Activated CD4-positive, alpha-beta memory T cell treated with anti-CD3 and anti-CD28 coated beads for 36 hours (primary cell): ENCODE measurements at regions of chr13 and their contacts with region 1.

Region 1: GRCh38 chr13:98528663-98529570 is 48.0 kb downstream of the STK24 start:
- DNase-seq: peak; percentile 56
- H3K4me3 Mint-ChIP-seq: peak overlapping the region; percentile 62
- H3K27ac Mint-ChIP-seq: peak overlapping the region; percentile 89
- H3K4me1 Mint-ChIP-seq: peaks cover 95% of the 10 kb centered on the region
- H3K27me3 Mint-ChIP-seq: no peaks in the 10 kb centered on the region

Region 2: DNA sequence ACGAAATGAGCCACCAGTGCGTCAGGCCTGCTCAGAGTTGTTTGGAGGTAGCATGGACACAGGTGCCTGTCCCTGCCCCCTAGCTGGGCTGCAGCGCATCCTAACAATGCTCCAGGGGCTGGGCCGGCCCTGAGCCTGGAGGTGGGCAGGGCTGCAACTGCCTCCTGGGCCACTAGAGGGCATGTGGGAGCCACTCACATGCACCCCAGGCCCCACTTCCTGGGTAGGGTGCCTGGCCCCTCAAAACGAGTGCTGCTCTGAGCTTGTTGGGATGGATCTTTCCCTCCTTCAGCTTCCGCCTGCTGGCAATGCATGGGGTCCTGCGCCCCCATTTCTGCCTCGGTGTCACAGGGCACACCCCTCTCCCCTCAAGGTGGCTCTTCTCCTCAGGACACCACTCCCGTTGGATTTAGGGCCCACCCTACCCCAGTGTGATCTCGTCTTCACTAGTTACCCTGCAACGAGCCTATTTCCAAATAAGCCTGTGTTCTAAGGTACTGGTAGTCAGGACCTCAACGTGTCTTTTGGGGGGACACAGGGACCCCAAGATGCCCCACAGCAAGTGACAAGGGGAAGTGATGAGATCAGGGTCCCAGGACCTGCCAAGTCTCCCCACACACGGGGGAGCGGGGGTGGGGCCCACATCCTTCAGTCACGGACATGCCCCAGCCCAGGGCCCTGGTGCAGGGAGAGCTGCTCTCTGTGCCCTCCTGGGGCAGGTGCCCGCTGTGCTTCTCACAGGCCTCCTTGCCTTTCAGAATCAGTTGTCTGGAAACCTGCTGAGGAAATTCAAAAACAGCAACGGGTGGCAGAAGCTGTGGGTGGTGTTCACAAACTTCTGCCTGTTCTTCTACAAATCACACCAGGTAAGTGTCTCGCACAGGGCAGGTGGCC is 83.3 kb before region 1 on chr13:
- CTCF ChIA-PET with region 1: interaction called, 11 read pairs
- POLR2A ChIA-PET with region 1: no interaction called
- intact Hi-C with region 1: no loop called
- DNase-seq: peak; percentile 88
- H3K4me3 Mint-ChIP-seq: no peak overlapping the region
- H3K27ac Mint-ChIP-seq: peak overlapping the region; percentile 83
- H3K4me1 Mint-ChIP-seq: peaks cover 17% of the 10 kb centered on the region
- H3K27me3 Mint-ChIP-seq: no peaks in the 10 kb centered on the region

Region 3: GRCh38 chr13:98484289-98485219 is 44.4 kb before region 1 on chr13:
- CTCF ChIA-PET with region 1: interaction called, 3 read pairs
- POLR2A ChIA-PET with region 1: interaction called, 3 read pairs
- intact Hi-C with region 1: loop called (anchors 1 kb)
- DNase-seq: peak; percentile 87
- H3K4me3 Mint-ChIP-seq: peak overlapping the region; percentile 30
- H3K27ac Mint-ChIP-seq: peak overlapping the region; percentile 83
- H3K4me1 Mint-ChIP-seq: peaks cover 92% of the 10 kb centered on the region
- H3K27me3 Mint-ChIP-seq: no peaks in the 10 kb centered on the region

Region 4: GRCh38 chr13:98542568-98543377 is 13.9 kb after region 1 on chr13:
- CTCF ChIA-PET with region 1: interaction called, 4 read pairs
- POLR2A ChIA-PET with region 1: interaction called, 18 read pairs
- intact Hi-C with region 1: loop called (anchors 2 kb)
- DNase-seq: peak; percentile 54
- H3K4me3 Mint-ChIP-seq: peak overlapping the region; percentile 68
- H3K27ac Mint-ChIP-seq: peak overlapping the region; percentile 83
- H3K4me1 Mint-ChIP-seq: peaks cover 94% of the 10 kb centered on the region
- H3K27me3 Mint-ChIP-seq: no peaks in the 10 kb centered on the region

Region 5: GRCh38 chr13:98565726-98566565 is 37.0 kb after region 1 on chr13:
- CTCF ChIA-PET with region 1: interaction called, 4 read pairs
- POLR2A ChIA-PET with region 1: interaction called, 14 read pairs
- intact Hi-C with region 1: no loop called
- DNase-seq: no peak
- H3K4me3 Mint-ChIP-seq: peak overlapping the region; percentile 54
- H3K27ac Mint-ChIP-seq: peak overlapping the region; percentile 98
- H3K4me1 Mint-ChIP-seq: peaks cover 88% of the 10 kb centered on the region
- H3K27me3 Mint-ChIP-seq: no peaks in the 10 kb centered on the region

Region 6: DNA sequence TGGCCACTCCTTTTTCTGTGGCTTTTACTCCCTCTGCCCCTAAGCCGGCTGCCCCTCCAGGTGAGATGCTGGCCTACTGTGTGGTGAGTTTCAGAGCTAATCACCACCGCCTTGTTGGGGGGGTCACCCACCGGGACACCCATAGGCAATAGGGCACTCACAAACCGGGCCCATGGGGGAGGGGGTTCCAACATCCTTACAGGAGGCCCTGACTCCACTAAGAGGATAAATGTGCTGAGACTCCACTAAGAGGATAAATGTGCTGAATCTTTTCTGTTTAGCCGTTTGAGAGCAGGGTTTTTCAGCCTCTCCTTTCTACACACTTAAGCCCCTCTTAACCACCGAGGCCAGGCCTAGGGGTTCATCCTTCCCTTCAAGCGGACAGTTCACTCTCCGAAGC is 149.8 kb after region 1 on chr13:
- CTCF ChIA-PET with region 1: no interaction called
- POLR2A ChIA-PET with region 1: no interaction called
- intact Hi-C with region 1: no loop called
- DNase-seq: no peak
- H3K4me3 Mint-ChIP-seq: no peak overlapping the region
- H3K27ac Mint-ChIP-seq: no peak overlapping the region
- H3K4me1 Mint-ChIP-seq: no peaks in the 10 kb centered on the region
- H3K27me3 Mint-ChIP-seq: no peaks in the 10 kb centered on the region